ENCODE measurements at regions of chr1 and their contacts with region 1.

Region 1: DNA sequence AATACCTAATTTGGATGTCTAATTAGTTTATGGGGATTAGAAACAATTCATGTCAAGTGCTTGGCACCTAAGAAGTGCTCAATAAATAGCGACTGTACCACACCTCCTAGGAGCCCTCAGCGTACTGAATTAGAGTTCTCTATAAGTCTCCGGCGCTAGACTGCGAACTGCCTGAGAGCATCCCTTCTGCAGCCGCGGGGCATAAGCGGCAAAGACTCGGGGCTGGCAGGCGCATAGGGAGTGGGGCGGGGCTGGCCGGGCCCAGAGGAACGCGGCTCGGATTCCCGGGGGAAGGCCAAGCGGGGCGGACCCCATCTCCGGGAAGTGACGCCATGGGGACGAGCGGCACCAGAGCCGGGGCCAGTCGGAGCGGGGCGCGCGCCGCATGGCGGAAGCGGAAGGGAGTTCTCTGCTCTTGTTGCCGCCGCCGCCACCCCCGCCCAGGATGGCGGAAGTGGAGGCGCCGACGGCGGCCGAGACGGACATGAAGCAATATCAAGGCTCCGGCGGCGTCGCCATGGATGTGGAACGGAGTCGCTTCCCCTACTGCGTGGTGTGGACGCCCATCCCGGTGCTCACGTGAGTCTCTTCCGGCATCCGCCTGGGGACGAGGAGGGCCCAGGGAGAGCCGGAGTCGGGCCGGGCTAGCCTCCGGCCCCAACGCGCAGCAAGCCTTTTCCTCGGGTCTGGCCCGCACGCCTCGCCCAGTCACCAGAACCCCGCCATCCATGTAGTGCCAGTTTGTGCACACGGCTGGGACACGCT is at the start of gene TMEM222:
- DNase-seq: peak; percentile 98 to 99 (median 98)
- H3K4me3 ChIP-seq: peak within 1 kb of the TSS; percentile 74 to 100 (median 99)
- H3K27ac ChIP-seq: peak within 1 kb of the TSS; percentile 97 to 98
- H3K4me1 ChIP-seq: peaks cover 10 to 19% (median 14%) of the 10 kb centered on the region in 4 experiments
- H3K27me3 ChIP-seq: peaks cover 0 to 3% (median 2%) of the 10 kb centered on the region in 5 experiments

Region 2: DNA sequence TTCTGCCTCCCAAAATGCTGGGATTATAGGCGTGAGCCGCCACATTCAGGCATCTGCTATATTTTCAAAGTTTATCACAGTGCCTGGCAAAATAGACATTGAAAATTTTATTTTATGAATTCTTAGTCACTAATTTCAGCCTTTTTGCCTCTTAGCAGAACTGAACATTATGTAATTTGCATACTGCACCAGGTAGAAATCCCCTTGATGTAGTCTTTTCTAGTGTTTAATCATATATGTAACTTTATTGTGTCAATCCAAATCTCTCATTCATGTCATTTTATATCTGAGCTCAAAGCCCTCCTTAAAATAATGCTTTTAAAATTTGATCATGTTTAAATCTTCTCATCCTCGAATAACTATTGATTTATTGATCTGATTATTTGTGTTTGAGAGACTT is 68.4 kb before region 1 on chr1:
- CTCF ChIA-PET with region 1: no interaction called
- POLR2A ChIA-PET with region 1: no interaction called
- DNase-seq: no peak
- H3K4me3 ChIP-seq: no peak overlapping the region
- H3K27ac ChIP-seq: no peak overlapping the region
- H3K4me1 ChIP-seq: peaks cover 0 to 12% (median 2%) of the 10 kb centered on the region in 4 experiments
- H3K27me3 ChIP-seq: no peaks in the 10 kb centered on the region

Region 3: DNA sequence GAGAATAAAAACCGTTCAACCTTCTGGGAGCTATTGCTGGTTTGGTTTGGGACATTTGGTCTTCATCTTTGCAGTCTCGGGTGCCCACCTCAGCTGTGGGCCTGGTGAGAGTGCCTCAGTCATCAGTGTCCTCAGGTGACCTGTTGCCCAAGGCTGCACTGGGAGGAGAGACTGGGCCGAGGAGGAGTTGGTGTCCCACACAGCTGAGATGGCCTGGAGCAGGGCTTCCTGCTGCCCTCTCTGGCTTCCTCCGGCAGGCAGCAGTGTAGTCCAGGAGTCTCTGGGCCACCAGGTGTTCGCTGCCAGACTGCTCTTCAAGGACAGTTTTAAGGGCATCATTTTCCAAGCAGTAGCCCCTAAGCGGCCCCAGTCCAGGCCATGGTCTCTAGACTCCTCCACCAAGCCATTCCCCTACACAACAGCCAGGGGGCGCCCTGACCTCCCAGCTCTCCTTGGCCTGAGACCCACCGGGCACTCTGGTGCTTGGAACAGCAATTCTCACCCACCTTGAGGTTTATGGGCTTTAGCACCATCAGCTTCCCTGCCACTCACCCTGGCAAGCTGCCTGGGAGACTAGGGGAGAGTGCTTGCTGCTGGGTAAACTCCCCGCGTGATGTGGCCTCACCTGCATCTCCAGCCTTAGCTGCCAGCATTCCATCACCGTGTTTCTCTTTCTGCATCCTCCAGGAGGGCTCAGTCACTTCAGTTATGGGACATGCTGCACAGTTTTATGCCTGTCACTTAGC is 10.7 kb after region 1 on chr1:
- CTCF ChIA-PET with region 1: interaction called, 32 read pairs
- POLR2A ChIA-PET with region 1: no interaction called
- DNase-seq: peak in 2 of 3 donors; percentile 64
- H3K4me3 ChIP-seq: no peak overlapping the region
- H3K27ac ChIP-seq: no peak overlapping the region
- H3K4me1 ChIP-seq: no peaks in the 10 kb centered on the region
- H3K27me3 ChIP-seq: no peaks in the 10 kb centered on the region